Endothelial cell of umbilical vein (primary cell): ENCODE measurements at regions of chr9 and their contacts with region 1.

Region 1: GRCh38 chr9:35116898-35117551 is 1.4 kb upstream of the ATOSB start:
- DNase-seq: peak; percentile 88
- H3K4me3 ChIP-seq: peak overlapping the region in 2 of 3 experiments; percentile 53 to 67
- H3K27ac ChIP-seq: no peak overlapping the region
- H3K4me1 ChIP-seq: peaks cover 31% of the 10 kb centered on the region
- H3K27me3 ChIP-seq: no peaks in the 10 kb centered on the region
- CTCF ChIP-seq: peak; percentile 92
- POLR2A ChIP-seq: no peak

Region 2: GRCh38 chr9:34957492-34958410 is 159.3 kb before region 1 on chr9 and contains the start of gene PHF24:
- CTCF ChIA-PET with region 1: no interaction called
- POLR2A ChIA-PET with region 1: no interaction called
- dilution Hi-C with region 1: no loop called
- intact Hi-C with region 1: no loop called
- DNase-seq: no peak
- H3K4me3 ChIP-seq: peak within 1 kb of the TSS in 1 of 3 experiments; percentile 16
- H3K27ac ChIP-seq: no peak within 1 kb of the TSS
- H3K4me1 ChIP-seq: peaks cover 3% of the 10 kb centered on the region
- H3K27me3 ChIP-seq: peaks cover 53 to 80% of the 10 kb centered on the region in 2 experiments
- CTCF ChIP-seq: no peak
- POLR2A ChIP-seq: no peak
- total RNA-seq, gene PHF24: not detected in 2 replicates

Region 3: DNA sequence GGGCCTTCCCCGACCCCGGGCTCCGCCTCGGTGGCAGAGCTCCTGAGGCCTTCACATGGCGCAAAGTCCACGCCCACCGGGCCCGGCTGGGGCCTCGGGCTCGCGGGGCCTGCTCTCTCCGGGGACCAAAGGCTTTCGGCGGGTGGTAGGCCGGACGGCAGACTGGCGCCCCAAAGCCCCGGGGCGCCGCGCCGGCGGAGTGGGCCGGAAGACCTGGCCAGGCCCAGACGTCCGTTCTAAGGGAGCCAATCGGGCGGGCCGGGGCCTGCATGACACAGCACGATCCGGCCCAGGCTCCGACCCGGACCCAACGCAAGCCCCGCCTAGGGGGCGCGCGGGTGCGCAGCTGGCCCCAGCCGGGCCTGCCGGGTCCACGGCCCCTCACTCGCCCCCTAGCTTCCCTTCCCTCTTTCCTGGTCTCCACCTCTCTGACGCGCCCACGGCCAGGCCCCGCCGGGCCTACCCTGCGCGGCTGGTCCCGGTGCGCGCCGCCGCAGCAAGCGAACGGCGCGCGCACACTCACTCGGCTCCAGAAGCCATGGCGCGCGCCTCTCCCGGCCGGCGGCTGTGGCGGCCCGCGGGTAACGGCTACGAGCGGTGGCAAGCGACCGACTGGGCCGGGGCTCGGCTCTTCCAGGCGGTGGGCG is 45.1 kb before region 1 on chr9:
- CTCF ChIA-PET with region 1: interaction called, 6 read pairs
- POLR2A ChIA-PET with region 1: interaction called, 8 read pairs
- dilution Hi-C with region 1: no loop called
- intact Hi-C with region 1: loop called (anchors 1 kb)
- DNase-seq: peak; percentile 85
- H3K4me3 ChIP-seq: peak overlapping the region; percentile 79 to 97 (median 96)
- H3K27ac ChIP-seq: peak overlapping the region; percentile 95
- H3K4me1 ChIP-seq: peaks cover 29% of the 10 kb centered on the region
- H3K27me3 ChIP-seq: no peaks in the 10 kb centered on the region
- CTCF ChIP-seq: peak; percentile 25 to 65
- POLR2A ChIP-seq: peak; percentile 51

Region 4: GRCh38 chr9:35102926-35103659 is 13.9 kb before region 1 on chr9 and contains the start of gene STOML2:
- CTCF ChIA-PET with region 1: interaction called, 13 read pairs
- POLR2A ChIA-PET with region 1: interaction called, 8 read pairs
- dilution Hi-C with region 1: no loop called
- intact Hi-C with region 1: no loop called
- DNase-seq: peak; percentile 96
- H3K4me3 ChIP-seq: peak within 1 kb of the TSS; percentile 50 to 83 (median 80)
- H3K27ac ChIP-seq: peak within 1 kb of the TSS; percentile 50
- H3K4me1 ChIP-seq: peaks cover 13% of the 10 kb centered on the region
- H3K27me3 ChIP-seq: no peaks in the 10 kb centered on the region
- CTCF ChIP-seq: no peak
- POLR2A ChIP-seq: peak; percentile 88
- total RNA-seq, gene STOML2: 142 and 144 TPM in 2 replicates

Region 5: GRCh38 chr9:35258676-35259474 is 141.8 kb after region 1 on chr9:
- CTCF ChIA-PET with region 1: interaction called, 109 read pairs
- POLR2A ChIA-PET with region 1: no interaction called
- dilution Hi-C with region 1: no loop called
- intact Hi-C with region 1: loop called (anchors 1 kb)
- DNase-seq: peak; percentile 82
- H3K4me3 ChIP-seq: no peak overlapping the region
- H3K27ac ChIP-seq: no peak overlapping the region
- H3K4me1 ChIP-seq: no peaks in the 10 kb centered on the region
- H3K27me3 ChIP-seq: no peaks in the 10 kb centered on the region
- CTCF ChIP-seq: peak; percentile 55 to 67
- POLR2A ChIP-seq: no peak

Region 6: DNA sequence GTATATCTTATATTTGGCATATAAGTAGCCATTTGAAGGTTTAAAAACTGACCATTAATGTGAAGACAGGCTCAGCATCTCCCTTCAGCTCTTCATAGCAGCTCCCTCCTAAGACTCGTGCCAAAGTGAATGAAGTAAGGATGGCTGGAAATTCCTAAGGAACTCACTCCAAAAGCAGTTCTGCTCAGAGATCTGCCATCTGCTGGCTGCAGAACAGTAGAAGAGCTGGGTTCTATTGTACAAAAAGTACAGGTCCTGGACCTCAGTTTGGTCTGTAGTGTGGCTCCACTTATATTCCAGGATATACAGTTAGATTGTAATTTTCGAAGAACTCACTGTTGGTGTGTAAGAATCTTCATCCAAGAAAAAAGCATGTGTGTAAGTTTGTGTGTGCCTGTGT is 268.0 kb after region 1 on chr9:
- CTCF ChIA-PET with region 1: interaction called, 62 read pairs
- POLR2A ChIA-PET with region 1: no interaction called
- dilution Hi-C with region 1: no loop called
- intact Hi-C with region 1: loop called (anchors 2 kb)
- DNase-seq: peak; percentile 52
- H3K4me3 ChIP-seq: no peak overlapping the region
- H3K27ac ChIP-seq: no peak overlapping the region
- H3K4me1 ChIP-seq: no peaks in the 10 kb centered on the region
- H3K27me3 ChIP-seq: no peaks in the 10 kb centered on the region
- CTCF ChIP-seq: peak; percentile 10 to 48
- POLR2A ChIP-seq: no peak

Region 7: DNA sequence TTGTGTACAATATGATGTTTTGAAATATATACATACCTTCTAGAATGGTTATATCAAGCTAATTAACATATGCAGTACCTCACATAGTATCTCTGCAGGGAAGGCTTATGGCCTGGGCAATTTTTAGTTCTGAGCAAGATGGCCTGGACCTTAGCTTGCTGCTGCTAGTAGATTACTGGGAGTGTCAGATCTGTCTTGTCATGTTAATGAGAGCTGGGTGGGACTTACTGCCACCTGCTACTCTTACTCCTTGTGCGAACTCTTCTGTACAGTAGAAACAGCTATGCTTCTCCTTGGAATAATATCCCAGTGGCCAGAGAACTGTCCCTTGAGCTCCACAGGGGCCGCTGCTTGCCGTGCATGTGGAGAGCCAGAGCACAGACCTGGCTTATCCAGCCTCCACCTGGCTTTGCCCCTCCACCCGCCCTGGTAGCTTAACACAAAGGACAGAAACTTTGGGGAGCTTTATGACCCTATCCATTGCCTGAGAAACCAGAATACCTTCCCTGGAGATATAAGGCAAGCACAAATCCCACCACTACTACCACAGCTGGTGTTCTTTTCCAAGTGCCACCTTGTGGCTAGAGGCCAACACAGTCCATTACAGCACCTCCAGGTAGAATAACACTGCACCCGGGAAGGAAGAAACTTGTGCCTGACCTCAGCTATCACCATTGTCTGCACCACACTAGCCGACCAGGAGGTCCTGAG is 298.5 kb after region 1 on chr9:
- CTCF ChIA-PET with region 1: interaction called, 29 read pairs
- POLR2A ChIA-PET with region 1: no interaction called
- dilution Hi-C with region 1: no loop called
- intact Hi-C with region 1: no loop called
- DNase-seq: no peak
- H3K4me3 ChIP-seq: no peak overlapping the region
- H3K27ac ChIP-seq: no peak overlapping the region
- H3K4me1 ChIP-seq: no peaks in the 10 kb centered on the region
- H3K27me3 ChIP-seq: no peaks in the 10 kb centered on the region
- CTCF ChIP-seq: no peak
- POLR2A ChIP-seq: no peak

Region 8: DNA sequence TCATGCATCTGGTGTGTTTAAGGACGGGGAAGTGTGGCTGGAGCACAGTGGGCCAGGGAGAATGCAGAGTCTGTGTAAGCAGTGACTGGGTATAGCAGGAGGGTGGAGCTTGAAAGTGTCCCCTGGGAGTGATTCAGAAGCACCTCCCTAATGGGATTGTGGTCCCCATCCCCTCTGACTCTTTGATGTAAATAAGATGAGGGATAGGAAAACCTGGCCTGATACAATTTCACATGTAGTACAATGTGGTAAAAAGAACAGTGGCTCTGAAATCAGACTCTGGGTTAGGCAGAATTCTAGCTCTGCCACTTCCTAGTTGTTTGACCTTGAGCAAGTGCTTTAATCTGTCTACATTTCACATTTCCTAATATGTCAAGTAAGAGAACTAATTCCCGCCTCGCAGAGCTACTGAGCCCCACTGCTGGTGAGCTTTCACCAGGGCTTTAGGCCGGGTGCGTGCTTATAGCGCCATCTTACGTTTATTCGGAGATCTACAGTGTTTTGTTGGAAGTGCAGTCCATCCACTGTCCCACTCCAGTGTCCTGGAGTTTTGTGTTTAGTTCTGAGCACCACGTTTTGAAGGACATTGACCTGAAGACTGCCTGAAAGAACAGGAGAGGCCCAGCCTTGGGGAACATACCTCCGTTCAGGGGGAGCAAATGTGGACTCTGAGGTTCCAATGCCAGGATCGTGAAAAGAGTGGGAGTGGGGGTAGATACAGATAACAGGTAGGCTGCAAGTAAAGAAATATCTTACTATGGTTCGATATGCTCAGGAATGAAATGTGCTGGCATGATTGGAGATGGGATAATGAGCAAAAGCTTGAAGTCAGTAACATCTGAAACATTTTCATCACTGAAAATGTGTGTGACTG is 436.9 kb after region 1 on chr9:
- CTCF ChIA-PET with region 1: interaction called, 18 read pairs
- POLR2A ChIA-PET with region 1: no interaction called
- dilution Hi-C with region 1: no loop called
- intact Hi-C with region 1: loop called (anchors 1 kb)
- DNase-seq: peak; percentile 76
- H3K4me3 ChIP-seq: no peak overlapping the region
- H3K27ac ChIP-seq: peak overlapping the region; percentile 24
- H3K4me1 ChIP-seq: peaks cover 6% of the 10 kb centered on the region
- H3K27me3 ChIP-seq: no peaks in the 10 kb centered on the region
- CTCF ChIP-seq: peak; percentile 76 to 79
- POLR2A ChIP-seq: no peak